ENCODE measurements at regions of chr1 and their contacts with region 1.

Region 1: GRCh38 chr1:36149237-36149972 is at the start of gene TRAPPC3:
- DNase-seq: peak; percentile 100
- H3K4me3 Mint-ChIP-seq: peak within 1 kb of the TSS; percentile 100
- H3K27ac Mint-ChIP-seq: peak within 1 kb of the TSS; percentile 100
- H3K4me1 Mint-ChIP-seq: peaks cover 24% of the 10 kb centered on the region
- H3K27me3 Mint-ChIP-seq: no peaks in the 10 kb centered on the region
- CTCF ChIP-seq: peak; percentile 91
- total RNA-seq, gene TRAPPC3: 72.8 and 75.5 TPM in 2 replicates

Region 2: DNA sequence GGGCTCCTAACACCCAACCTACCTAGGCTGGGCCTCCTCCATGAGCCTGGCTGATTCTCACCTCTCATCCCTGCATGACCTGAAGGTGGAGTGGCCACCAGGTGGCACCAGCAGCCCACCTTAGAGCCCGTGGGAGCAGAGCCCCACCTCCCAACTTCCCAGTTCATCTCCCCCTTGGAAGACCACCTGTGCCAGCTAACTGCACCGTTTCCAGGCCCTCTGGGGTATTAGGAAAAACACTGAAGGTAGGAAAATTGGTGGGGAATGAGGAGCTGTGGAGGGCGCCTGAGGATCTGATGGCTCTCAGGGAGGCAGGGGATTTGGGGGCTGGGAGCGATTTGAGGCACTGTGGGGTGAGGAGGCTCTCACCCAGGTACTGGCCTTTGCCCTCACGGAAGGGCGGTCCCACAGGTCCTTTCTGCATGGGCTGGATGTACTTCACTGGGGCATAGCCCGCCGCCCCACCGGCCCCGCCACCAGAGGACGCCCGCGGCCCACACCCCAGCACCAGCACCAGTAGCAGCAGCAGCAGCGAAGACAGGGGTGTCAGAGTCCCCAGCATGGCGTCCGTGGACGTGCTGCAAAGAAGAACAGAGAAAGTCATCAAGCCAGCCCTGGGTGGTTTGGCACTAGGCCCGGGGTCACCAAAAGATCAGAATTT is 49.6 kb before region 1 on chr1:
- CTCF ChIA-PET with region 1: interaction called, 5 read pairs
- POLR2A ChIA-PET with region 1: interaction called, 3 read pairs
- intact Hi-C with region 1: loop called (anchors 1 kb)
- DNase-seq: peak; percentile 77
- H3K4me3 Mint-ChIP-seq: no peak overlapping the region
- H3K27ac Mint-ChIP-seq: no peak overlapping the region
- H3K4me1 Mint-ChIP-seq: no peaks in the 10 kb centered on the region
- H3K27me3 Mint-ChIP-seq: no peaks in the 10 kb centered on the region
- CTCF ChIP-seq: peak; percentile 77

Region 3: GRCh38 chr1:36160949-36161485 is 11.6 kb after region 1 on chr1:
- CTCF ChIA-PET with region 1: interaction called, 85 read pairs
- POLR2A ChIA-PET with region 1: interaction called, 94 read pairs
- intact Hi-C with region 1: loop called (anchors 1 kb)
- DNase-seq: peak; percentile 59
- H3K4me3 Mint-ChIP-seq: peak overlapping the region; percentile 66
- H3K27ac Mint-ChIP-seq: peak overlapping the region; percentile 94
- H3K4me1 Mint-ChIP-seq: peaks cover 61% of the 10 kb centered on the region
- H3K27me3 Mint-ChIP-seq: no peaks in the 10 kb centered on the region
- CTCF ChIP-seq: peak; percentile 40

Region 4: DNA sequence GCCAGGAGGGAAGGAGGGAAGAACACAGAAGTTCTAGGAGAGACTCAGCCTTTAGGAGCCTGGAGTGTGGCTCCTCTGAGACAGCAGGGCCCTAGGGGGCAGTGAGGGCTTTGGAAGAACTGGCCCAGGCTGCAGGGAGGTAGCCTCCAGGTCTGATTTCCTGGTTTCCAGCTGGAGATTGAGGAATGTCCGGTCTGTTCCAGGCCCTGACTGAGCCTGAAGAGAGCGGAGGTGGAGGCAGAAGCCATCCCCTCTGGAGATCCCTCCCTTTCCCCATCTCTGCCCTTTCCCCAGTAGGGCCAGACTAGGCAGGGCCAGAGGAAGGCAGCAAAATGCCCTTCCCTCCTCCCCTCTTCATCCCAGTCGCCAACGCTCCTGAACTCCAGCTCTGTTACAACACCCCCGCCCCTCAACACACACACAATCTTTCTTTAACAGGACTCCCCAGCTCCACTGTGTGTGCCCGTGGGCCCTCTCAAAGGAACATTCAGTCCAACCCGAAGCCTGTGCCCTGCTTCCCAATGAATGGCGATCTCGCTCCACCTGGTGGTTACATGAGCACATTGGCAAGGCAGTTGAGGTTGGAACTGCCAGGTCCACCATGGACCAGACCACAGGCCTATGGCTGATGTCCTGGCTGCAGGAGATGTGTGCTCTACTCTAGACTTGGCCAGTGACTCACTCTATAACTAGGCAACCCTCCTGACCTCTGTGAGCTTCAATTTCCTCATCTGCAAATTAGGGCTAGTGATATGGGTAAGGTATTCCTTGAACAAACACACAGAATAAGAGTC is 38.6 kb after region 1 on chr1:
- CTCF ChIA-PET with region 1: interaction called, 194 read pairs
- POLR2A ChIA-PET with region 1: interaction called, 61 read pairs
- intact Hi-C with region 1: loop called (anchors 1 kb)
- DNase-seq: peak; percentile 91
- H3K4me3 Mint-ChIP-seq: no peak overlapping the region
- H3K27ac Mint-ChIP-seq: peak overlapping the region; percentile 43
- H3K4me1 Mint-ChIP-seq: peaks cover 15% of the 10 kb centered on the region
- H3K27me3 Mint-ChIP-seq: no peaks in the 10 kb centered on the region
- CTCF ChIP-seq: peak; percentile 85

Region 5: DNA sequence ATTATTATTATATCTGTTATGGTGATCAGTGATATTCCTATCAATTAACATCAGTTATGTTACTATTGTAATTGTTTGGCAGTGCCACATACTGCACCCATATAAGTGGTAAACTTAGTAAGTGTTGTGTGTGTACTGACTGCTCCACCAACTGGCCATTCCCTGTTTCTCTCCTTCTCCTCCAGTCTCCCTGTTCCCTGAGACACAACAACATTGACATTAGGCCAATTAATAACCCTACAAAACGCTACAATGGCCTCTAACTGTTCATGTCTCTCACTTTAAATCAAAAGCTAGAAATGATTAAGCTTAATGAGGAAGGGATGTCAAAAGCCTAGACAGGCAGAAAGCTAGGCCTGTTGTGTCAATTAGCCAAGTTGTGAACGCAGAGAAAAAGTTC is 68.3 kb after region 1 on chr1:
- CTCF ChIA-PET with region 1: interaction called, 23 read pairs
- POLR2A ChIA-PET with region 1: interaction called, 59 read pairs
- intact Hi-C with region 1: loop called (anchors 1 kb)
- DNase-seq: peak; percentile 50
- H3K4me3 Mint-ChIP-seq: no peak overlapping the region
- H3K27ac Mint-ChIP-seq: no peak overlapping the region
- H3K4me1 Mint-ChIP-seq: peaks cover 22% of the 10 kb centered on the region
- H3K27me3 Mint-ChIP-seq: no peaks in the 10 kb centered on the region
- CTCF ChIP-seq: peak; percentile 12

Region 6: DNA sequence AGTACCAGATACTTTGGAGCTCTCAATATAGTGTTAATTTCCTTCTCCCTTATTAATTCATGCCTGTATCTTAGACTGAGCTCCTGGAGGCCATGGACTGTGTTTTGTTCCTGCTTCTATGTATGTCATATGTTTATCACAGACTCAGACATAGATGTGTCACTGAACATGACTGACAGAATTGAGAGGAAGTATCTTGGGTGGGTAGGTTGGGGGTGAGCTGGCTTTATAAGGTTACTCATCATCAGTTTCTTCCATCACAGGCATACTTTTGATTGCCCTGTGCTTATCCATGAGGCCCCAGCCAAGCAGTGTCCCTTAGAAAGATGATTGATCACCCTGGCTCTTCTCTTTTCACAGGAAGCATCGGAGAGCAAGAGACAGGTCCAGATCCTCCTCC is 151.1 kb after region 1 on chr1:
- CTCF ChIA-PET with region 1: interaction called, 11 read pairs
- POLR2A ChIA-PET with region 1: interaction called, 14 read pairs
- intact Hi-C with region 1: no loop called
- DNase-seq: no peak
- H3K4me3 Mint-ChIP-seq: no peak overlapping the region
- H3K27ac Mint-ChIP-seq: peak overlapping the region; percentile 67
- H3K4me1 Mint-ChIP-seq: peaks cover 13% of the 10 kb centered on the region
- H3K27me3 Mint-ChIP-seq: no peaks in the 10 kb centered on the region
- CTCF ChIP-seq: no peak

Region 7: DNA sequence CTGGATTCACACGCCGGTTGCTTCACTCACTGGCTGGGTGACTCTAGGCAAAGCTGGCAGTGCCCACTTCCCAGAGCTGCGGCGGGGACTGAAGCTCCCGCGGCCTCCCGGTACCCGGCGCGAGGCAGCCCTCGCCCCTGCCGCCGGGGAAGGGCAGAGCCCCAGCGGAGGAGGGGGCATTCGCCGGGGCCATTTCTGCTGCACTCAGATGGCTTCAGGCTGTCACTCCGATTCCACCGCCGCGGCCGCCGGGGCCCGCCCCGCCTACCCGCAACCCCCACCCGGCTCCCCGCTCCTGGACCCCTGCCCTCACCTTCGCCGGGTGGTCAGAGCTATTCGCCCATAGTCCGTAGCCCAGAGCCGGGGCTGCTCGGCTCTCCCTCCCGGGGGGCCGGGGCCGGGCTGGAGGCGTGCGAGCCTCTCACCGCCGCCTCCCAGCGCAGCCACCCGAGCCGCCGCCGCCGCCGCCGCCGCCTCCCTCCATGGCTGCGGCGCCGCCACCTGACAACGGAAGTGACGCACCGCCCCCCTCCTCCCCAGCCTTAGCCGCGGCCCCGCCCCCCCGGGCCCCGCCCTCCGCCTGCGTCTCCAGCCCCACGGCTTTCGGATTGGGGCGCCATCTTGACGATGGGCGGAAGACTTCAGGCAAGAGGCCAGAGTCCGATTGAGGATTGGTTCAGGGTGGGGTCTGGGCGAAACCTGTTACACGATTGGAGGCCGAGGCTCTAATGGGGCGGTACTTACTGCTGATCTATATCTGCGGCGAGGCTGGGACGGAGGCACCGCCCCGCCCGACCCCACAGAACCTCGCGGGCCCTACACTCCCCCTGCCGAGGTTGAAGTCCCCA is 236.2 kb after region 1 on chr1 and contains the start of gene STK40:
- CTCF ChIA-PET with region 1: interaction called, 7 read pairs
- POLR2A ChIA-PET with region 1: interaction called, 24 read pairs
- intact Hi-C with region 1: no loop called
- DNase-seq: peak; percentile 99
- H3K4me3 Mint-ChIP-seq: peak within 1 kb of the TSS; percentile 89
- H3K27ac Mint-ChIP-seq: peak within 1 kb of the TSS; percentile 99
- H3K4me1 Mint-ChIP-seq: peaks cover 39% of the 10 kb centered on the region
- H3K27me3 Mint-ChIP-seq: no peaks in the 10 kb centered on the region
- CTCF ChIP-seq: no peak
- total RNA-seq, gene STK40: 44.0 and 47.4 TPM in 2 replicates